Posterior vena cava (tissue), 2 donors: ENCODE measurements at regions of chr22 and their contacts with region 1.

Region 1: DNA sequence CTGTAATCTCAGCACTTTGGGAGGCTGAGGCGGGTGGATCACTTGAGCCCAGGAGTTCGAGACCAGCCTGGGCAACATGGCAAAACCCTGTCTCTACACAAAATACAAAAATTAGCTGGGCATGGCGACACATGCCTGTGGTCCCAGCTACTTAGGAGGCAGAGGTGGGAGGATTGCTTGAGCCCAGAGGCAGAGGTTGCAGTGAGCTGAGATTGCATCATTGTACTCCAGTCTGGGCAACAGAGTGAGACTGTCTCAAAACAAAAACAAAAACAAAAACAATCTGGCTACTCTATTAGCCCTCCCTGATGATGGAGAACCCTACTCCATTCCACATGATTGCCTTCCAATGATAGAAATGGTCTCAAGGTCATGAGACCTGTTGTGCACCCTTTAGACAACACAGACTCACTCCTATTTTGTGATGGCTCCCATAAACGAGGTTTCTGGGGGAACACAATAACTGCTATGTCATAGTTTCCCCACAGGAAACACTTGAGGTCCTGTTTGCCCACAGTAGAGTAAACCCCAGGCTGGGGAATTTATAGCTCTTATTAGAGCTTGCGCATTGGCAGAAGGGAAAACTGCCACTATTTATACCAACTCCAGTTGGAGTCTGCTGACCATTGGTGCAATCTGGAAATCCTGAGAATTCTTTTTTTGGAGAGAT is 28.6 kb downstream of the MIF start:
- DNase-seq: no peak

Region 2: GRCh38 chr22:23970816-23971486 is 48.2 kb after region 1 on chr22:
- intact Hi-C with region 1: loop called in 1 of 2 experiments (anchors 10 kb)
- DNase-seq: peak; percentile 57